HEK293 (cell line): ENCODE measurements at regions of chr9 and their contacts with region 1.

Region 1: DNA sequence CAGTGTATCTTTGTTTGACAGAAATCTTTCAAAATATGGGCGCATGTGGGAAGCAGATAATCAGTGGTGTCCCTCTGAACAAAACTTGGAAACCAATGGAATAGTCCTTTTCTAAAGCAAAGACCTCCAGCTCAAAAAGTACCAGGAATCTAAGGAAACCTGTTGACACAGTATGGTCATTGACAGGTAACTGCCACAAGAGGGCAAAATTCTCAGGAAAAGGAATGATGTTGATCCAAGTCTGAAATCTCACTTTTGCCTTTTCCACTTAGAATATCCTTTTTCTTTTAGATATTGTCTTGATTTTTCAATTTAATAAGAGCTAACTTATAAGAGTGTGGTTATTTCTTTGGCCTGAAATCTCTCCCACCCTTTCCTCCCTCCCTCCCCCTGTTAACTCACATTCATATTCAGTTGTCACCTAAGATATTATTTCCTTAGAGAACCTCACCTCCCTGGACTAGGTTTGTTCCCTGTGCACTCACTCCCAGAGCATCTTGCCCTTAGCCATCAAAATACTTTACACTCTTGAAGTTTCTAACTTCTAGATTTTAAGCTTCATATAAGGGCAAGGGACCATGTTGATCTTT is 59.0 kb upstream of the BARX1 start:
- H3K4me3 ChIP-seq: no peak overlapping the region
- H3K27ac ChIP-seq: no peak overlapping the region
- H3K4me1 ChIP-seq: no peaks in the 10 kb centered on the region
- CTCF ChIP-seq: no peak

Region 2: GRCh38 chr9:94002316-94003140 is 11.6 kb before region 1 on chr9:
- CTCF ChIA-PET with region 1: interaction called, 122 read pairs
- POLR2A ChIA-PET with region 1: no interaction called
- H3K4me3 ChIP-seq: no peak overlapping the region
- H3K27ac ChIP-seq: no peak overlapping the region
- H3K4me1 ChIP-seq: no peaks in the 10 kb centered on the region
- CTCF ChIP-seq: peak; percentile 34

Region 3: GRCh38 chr9:94029932-94030317 is 15.8 kb after region 1 on chr9:
- CTCF ChIA-PET with region 1: interaction called, 10 read pairs
- POLR2A ChIA-PET with region 1: no interaction called
- H3K4me3 ChIP-seq: peak overlapping the region; percentile 83
- H3K27ac ChIP-seq: no peak overlapping the region; the same call in 1 of the 2 replicates
- H3K4me1 ChIP-seq: no peaks in the 10 kb centered on the region; the same call in 1 of the 2 replicates
- CTCF ChIP-seq: no peak

Region 4: GRCh38 chr9:94065535-94065961 is 51.4 kb after region 1 on chr9:
- CTCF ChIA-PET with region 1: interaction called, 28 read pairs
- POLR2A ChIA-PET with region 1: no interaction called
- H3K4me3 ChIP-seq: no peak overlapping the region
- H3K27ac ChIP-seq: no peak overlapping the region
- H3K4me1 ChIP-seq: no peaks in the 10 kb centered on the region
- CTCF ChIP-seq: peak; percentile 32; the same call in 1 of the 2 replicates

Region 5: GRCh38 chr9:94084314-94084713 is 70.2 kb after region 1 on chr9 and contains the start of gene PTPDC1:
- CTCF ChIA-PET with region 1: no interaction called
- POLR2A ChIA-PET with region 1: no interaction called
- H3K4me3 ChIP-seq: no peak within 1 kb of the TSS
- H3K27ac ChIP-seq: no peak within 1 kb of the TSS
- H3K4me1 ChIP-seq: no peaks in the 10 kb centered on the region
- CTCF ChIP-seq: no peak

Region 6: GRCh38 chr9:94199776-94200175 is 185.6 kb after region 1 on chr9:
- CTCF ChIA-PET with region 1: interaction called, 11 read pairs
- POLR2A ChIA-PET with region 1: no interaction called
- H3K4me3 ChIP-seq: no peak overlapping the region
- H3K27ac ChIP-seq: no peak overlapping the region
- H3K4me1 ChIP-seq: no peaks in the 10 kb centered on the region
- CTCF ChIP-seq: no peak

Region 7: DNA sequence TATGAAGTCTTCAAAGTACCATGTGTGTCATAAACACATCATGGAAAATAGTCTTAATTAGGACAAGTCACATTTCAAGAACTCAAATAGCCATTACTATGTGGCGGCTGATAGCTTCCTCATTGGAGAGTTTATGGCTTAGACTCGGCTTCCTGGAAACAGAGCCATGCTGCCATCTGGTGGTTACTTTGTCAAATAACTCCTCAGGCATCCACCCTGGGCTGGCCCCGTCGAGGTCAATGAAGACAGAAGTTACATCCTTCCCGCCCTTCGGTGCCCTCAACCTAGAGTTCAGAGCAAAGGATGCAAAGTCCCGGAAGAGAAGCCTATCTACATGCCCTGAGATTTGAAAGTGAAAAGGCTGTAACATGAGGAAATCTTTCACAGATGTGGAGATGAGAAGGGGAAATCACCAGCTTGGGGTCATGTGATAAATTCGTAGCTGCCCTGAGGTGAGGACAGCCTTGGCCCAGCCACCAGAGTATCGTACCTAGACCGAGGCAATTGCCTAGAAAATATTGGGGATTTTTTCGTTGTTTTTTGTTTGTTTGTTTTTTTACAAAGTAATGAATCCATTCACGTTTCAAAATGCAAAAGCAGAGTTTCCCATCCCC is 199.5 kb after region 1 on chr9:
- CTCF ChIA-PET with region 1: interaction called, 175 read pairs
- POLR2A ChIA-PET with region 1: interaction called, 3 read pairs
- H3K4me3 ChIP-seq: no peak overlapping the region
- H3K27ac ChIP-seq: no peak overlapping the region
- H3K4me1 ChIP-seq: no peaks in the 10 kb centered on the region
- CTCF ChIP-seq: peak; percentile 39

Region 8: DNA sequence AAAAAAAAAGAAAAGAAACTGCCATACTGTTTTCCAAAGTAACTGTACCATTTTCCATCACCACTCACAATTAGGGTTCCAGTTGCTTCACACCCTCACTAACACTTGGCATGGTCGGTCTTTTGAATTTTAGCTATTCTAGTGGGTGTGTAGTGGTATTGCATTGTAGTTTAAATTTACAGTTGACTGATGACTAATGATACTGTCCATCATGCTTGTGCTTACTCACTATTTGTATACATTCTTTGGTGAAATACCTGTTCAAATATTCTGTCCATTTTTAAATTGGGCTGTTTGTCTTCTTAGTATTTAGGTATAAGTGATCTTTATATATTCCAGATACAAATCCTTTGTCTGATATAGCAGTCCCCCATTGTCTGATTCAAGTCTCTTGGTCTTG is 208.7 kb after region 1 on chr9:
- CTCF ChIA-PET with region 1: interaction called, 175 read pairs
- POLR2A ChIA-PET with region 1: no interaction called
- H3K4me3 ChIP-seq: no peak overlapping the region
- H3K27ac ChIP-seq: no peak overlapping the region
- H3K4me1 ChIP-seq: no peaks in the 10 kb centered on the region
- CTCF ChIP-seq: no peak